Activated CD4-positive, alpha-beta memory T cell treated with anti-CD3 and anti-CD28 coated beads, Interleukin-2, amount 10 ng/mL, durations not matched to agents 7 days and 5 days (primary cell): ENCODE measurements at regions of chr15 and their contacts with region 1.

Region 1: DNA sequence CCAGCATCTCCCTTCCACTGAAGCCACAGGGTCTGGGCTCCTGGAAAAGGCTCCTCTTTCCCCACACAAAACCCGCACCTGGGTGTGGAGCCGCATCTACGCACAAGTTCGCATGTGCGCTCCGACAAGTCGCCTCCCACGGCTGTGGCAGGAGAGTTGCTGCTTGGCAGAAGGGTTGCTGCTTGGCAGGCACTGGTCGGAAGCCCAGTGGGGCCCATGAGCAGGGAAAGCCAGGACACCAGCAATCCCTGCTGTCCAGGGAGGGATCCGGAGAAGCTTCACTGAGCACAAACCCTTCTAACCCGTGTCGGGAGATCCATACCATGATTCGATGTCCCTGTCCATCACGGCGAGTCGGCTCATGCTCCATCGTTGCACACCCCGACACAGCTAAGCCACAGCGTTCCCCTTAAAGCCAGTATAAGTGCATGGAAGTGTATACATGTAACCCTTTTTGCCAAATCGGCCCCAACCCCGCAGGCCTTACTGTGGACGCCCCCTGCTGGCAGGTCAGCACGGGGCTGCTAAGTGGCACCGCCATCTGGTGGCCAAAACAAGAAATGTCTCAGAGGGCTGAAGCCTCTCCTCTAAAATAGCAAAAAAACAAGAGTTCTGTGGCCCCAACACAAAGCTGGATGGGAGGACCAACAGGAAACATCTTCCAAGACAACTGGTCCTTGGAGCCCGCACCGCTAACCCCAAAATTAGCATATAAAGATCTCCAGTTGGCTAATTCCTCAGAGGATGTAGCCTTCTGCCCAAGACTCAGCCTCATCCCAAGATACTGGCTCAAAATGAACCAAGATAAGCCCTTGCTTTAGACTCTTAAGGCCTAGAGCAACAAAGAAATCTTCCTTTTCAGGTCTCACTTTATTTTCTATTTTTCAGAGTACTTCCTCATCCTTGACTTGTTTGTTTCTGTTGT is 8.3 kb downstream of the ANKRD63 start:
- DNase-seq: peak; percentile 90
- H3K4me3 Mint-ChIP-seq: no peak overlapping the region
- H3K27ac Mint-ChIP-seq: no peak overlapping the region
- H3K4me1 Mint-ChIP-seq: peaks cover 5% of the 10 kb centered on the region
- H3K27me3 Mint-ChIP-seq: peaks cover 26% of the 10 kb centered on the region

Region 2: DNA sequence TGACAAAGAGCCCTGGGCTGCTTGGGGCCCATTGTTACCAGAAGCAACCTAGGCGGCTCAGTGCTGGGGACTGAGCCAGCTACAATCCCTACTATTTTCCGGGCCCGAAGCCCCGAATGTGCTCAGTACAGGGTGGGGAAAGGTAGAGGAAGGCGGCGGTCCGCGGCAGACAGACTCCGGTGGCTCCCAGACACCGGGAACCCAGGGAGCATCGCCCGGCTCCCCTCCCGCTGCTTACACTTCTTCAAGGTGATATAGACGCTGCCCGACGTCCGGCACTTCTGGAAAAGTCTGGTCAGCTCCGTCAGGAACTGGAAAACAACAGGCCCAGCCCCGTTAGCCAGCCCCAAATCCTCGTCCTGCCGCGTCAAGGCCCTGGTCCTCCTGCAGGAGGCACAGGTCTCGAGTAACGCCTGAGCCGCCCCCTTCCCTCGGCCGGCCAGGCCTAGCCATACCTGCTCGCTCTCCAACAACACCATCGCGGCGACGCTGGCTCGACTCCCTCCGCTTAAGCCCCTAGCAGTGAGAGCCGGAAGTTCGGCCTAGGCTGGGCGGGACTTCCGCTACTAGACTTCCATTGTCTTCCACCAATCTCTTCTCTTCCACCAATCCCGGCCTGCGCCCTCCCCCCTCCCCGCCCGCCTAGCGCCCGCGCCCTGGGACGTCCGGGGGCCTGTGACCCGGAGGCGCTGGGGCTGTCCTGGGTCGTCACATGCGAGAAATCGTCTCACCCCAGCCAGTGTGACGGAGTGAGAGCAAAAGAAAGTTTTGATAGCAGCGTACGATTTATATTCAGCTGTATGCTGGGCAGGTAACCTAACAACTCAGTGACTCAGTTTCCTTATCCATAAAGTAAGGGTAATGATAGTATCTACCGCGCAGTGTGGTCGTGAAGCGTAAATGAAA is 235.7 kb before region 1 on chr15 and contains the start of gene SRP14:
- CTCF ChIA-PET with region 1: interaction called, 20 read pairs
- POLR2A ChIA-PET with region 1: no interaction called
- DNase-seq: peak; percentile 94
- H3K4me3 Mint-ChIP-seq: peak within 1 kb of the TSS; percentile 100
- H3K27ac Mint-ChIP-seq: peak within 1 kb of the TSS; percentile 95
- H3K4me1 Mint-ChIP-seq: peaks cover 56% of the 10 kb centered on the region
- H3K27me3 Mint-ChIP-seq: no peaks in the 10 kb centered on the region
- total RNA-seq, gene SRP14: 150 to 153 TPM

Region 3: GRCh38 chr15:40217159-40217824 is 57.3 kb before region 1 on chr15:
- CTCF ChIA-PET with region 1: interaction called, 150 read pairs
- POLR2A ChIA-PET with region 1: interaction called, 8 read pairs
- DNase-seq: peak; percentile 32
- H3K4me3 Mint-ChIP-seq: no peak overlapping the region
- H3K27ac Mint-ChIP-seq: no peak overlapping the region
- H3K4me1 Mint-ChIP-seq: no peaks in the 10 kb centered on the region
- H3K27me3 Mint-ChIP-seq: no peaks in the 10 kb centered on the region

Region 4: DNA sequence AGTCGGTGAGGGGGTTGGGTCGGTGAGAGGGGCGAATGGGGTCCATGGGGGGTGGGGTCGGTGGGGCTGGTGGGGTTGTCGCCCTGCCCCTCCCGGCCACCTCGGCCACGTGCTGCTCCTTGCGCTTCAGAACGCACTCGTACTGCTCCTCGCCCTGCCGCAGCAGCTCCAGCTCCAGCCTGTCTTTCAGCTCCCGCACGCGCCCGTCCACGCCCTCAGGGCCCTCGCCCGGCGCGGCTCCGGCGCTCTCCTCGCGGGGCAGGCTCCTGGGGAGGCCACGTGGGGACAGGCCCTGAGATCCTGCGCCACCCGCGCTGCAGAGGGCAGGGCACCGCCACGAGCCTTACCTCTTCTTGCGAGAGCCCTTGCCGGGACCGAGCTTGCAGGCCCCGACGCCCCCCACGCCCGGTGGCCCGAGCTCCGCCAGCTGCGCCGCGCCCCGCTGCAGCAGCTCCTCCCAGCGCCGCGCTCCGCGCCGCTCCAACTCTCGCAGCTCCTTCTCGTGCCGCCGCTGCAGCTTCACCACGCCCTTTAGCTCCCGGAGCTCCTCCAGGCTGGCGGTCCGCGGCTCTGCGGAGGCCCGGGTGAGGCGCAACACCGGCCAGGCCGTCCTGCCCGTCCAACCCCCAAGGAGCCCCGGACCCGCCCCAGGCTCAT is 16.4 kb after region 1 on chr15:
- CTCF ChIA-PET with region 1: interaction called, 13 read pairs
- POLR2A ChIA-PET with region 1: interaction called, 3 read pairs
- DNase-seq: no peak
- H3K4me3 Mint-ChIP-seq: no peak overlapping the region
- H3K27ac Mint-ChIP-seq: no peak overlapping the region
- H3K4me1 Mint-ChIP-seq: no peaks in the 10 kb centered on the region
- H3K27me3 Mint-ChIP-seq: no peaks in the 10 kb centered on the region

Region 5: DNA sequence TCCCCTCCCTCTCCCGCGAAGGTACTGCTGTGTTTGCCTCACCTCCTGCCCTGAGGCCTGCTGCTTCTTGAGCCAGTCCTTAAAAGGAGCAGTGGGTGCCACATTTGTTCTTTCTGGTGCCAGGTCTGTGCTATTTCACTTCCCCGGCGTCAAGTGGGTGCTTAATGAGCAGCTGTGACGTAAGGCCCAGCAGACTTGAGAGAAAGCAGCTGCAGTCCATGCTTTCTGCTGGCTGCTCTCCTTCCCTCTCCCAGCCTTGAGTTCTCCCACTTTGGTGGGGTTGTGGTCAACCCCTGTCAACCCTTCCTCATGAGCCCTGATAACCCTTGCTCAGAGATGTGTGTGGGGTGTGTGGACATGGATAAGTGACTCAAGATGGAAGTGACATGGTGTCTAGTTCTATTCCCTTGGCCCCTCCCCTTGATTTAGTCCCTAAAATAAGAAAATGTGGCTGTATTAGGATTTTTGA is 55.8 kb after region 1 on chr15:
- CTCF ChIA-PET with region 1: interaction called, 122 read pairs
- POLR2A ChIA-PET with region 1: no interaction called
- DNase-seq: no peak
- H3K4me3 Mint-ChIP-seq: no peak overlapping the region
- H3K27ac Mint-ChIP-seq: no peak overlapping the region
- H3K4me1 Mint-ChIP-seq: peaks cover 34% of the 10 kb centered on the region
- H3K27me3 Mint-ChIP-seq: peaks cover 2% of the 10 kb centered on the region